Gastrocnemius medialis (tissue), 4 donors: ENCODE measurements at regions of chr13 and their contacts with region 1.

Region 1: DNA sequence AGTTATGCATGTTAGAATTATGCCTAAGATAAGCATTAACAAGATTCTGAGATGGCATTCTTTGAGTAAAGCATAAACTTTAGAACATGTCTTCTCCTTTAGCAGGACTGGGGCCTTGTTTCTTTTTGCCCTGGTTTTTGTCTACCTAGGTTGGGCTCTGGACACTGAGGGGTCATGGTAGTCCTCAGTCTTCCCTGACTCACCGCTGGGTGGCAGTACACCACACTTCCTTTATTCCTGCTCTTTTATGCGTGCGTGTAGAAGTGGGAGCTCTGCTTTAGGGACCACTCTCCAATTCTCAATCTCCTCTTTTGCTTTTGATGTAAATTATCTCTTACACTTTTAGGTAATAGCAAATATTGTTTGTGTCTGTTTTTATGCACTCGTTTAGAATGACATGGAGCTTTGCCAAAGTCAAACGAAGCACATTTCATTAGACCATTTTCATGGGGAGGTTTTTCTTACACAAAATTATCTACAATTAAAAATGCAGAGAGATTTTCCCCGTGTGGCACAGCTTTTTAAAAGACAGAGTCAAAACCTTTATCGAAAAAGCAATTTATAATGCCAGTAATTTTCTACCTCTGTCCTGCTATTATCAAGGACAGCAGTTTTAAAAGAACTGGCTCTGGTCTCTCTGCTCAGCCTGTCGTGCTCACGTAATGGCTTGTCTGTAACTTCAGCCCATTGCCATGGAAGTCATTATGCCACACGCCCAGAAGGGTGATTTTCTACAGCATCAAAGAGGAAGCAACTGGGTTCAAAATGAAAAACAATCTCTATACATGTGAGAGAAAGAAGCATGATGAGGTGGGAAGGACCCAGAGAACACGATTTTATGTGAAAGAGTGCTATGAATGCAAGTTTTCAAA is 413.9 kb downstream of the COG6 start:
- DNase-seq: peak; percentile 64 to 79
- ATAC-seq: peak; percentile 94 to 98
- H3K4me3 ChIP-seq: peak overlapping the region; percentile 19 to 34 (median 26)
- H3K27ac ChIP-seq: peak overlapping the region; percentile 4 to 57 (median 44)
- H3K4me1 ChIP-seq: peaks cover 7 to 9% of the 10 kb centered on the region in 2 donors
- H3K27me3 ChIP-seq: no peaks in the 10 kb centered on the region
- CTCF ChIP-seq: peak; percentile 82 to 92 (median 89)
- POLR2A ChIP-seq: no peak

Region 2: DNA sequence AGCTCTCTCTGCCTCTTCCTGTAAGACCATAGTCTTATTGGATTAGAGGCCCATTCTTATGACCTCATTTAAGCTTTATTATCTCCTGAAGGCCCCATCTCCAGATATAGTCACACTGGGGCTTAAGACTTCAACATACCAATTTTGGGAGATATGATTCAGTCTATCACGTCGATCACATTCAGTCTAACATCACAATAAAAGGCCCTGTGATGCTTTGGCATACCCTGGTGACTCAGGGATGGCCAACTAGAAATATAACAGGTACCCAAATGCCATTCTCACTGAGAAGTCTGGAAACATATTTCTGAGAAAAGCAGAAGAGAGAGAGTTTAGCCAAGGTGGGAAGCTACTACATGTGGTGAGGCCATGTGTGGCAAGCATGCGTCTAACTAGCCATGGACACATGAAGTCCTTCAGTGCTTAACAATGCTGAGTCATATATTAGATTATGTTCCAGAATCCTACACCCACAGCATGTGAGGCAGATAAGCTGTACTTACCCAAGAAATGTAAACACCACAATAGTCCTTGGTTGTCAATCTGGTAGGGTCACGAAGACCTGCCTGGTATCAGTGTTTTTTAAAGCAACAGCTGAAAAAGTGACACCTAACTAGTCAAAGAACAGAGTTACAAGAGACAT is 111.9 kb after region 1 on chr13:
- in situ Hi-C with region 1: no loop called
- intact Hi-C with region 1: no loop called
- DNase-seq: no peak
- ATAC-seq: peak; percentile 61 to 82
- H3K4me3 ChIP-seq: no peak overlapping the region
- H3K27ac ChIP-seq: no peak overlapping the region
- H3K4me1 ChIP-seq: peaks cover 0 to 3% of the 10 kb centered on the region in 2 donors
- H3K27me3 ChIP-seq: no peaks in the 10 kb centered on the region
- CTCF ChIP-seq: no peak
- POLR2A ChIP-seq: no peak

Region 3: DNA sequence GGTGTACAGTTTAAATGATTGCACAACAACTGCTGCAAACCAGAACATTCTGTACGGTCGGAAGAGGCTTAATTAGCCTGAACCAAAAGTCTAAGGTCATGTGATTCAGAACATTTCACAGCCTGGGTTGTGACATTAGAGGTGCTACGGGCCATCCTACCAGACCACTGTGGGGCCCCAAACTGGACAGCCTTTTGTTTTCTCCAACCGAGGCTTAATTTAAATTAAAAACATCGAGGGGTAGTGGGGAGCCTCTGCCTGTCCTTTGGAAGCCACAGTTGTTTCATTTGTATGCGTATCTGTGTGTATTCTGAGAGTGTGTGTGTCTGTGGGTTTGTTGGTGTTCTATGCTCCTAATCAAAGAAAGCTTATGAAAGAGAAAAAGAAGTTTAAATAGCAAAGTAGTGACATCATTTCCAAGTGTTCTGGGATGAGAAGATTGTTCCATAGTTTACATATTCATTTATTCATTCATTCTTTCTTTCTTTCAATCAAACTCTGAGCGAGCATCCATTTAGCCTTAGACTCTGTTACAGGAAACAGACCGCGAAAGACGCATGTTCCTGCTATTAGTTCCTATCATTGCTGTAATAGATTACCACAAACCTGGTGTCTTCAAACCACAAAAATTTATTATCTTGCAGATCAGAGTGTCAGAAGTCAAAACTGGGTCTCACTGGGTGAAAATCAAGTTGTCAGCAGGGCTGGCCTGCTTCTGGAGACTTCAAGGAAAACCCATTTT is 152.2 kb after region 1 on chr13:
- in situ Hi-C with region 1: loop called in 1 of 4 experiments (anchors 10 kb)
- intact Hi-C with region 1: no loop called
- DNase-seq: peak; percentile 55 to 68
- ATAC-seq: peak; percentile 96 to 98
- H3K4me3 ChIP-seq: no peak overlapping the region
- H3K27ac ChIP-seq: peak overlapping the region; percentile 76 to 81 (median 78)
- H3K4me1 ChIP-seq: peaks cover 13 to 26% of the 10 kb centered on the region in 2 donors
- H3K27me3 ChIP-seq: no peaks in the 10 kb centered on the region
- CTCF ChIP-seq: no peak
- POLR2A ChIP-seq: no peak

Region 4: GRCh38 chr13:40318366-40318765 is 249.0 kb after region 1 on chr13:
- in situ Hi-C with region 1: loop called in 1 of 4 experiments (anchors 25 kb)
- intact Hi-C with region 1: no loop called
- DNase-seq: peak; percentile 82 to 86
- ATAC-seq: peak; percentile 79 to 81
- H3K4me3 ChIP-seq: no peak overlapping the region
- H3K27ac ChIP-seq: peak overlapping the region in 3 of 4 donors; percentile 3 to 49 (median 24)
- H3K4me1 ChIP-seq: peaks cover 11 to 17% of the 10 kb centered on the region in 2 donors
- H3K27me3 ChIP-seq: no peaks in the 10 kb centered on the region
- CTCF ChIP-seq: no peak
- POLR2A ChIP-seq: no peak

Region 5: GRCh38 chr13:40503966-40504591 is 434.7 kb after region 1 on chr13:
- in situ Hi-C with region 1: loop called in 1 of 4 experiments (anchors 25 kb)
- intact Hi-C with region 1: no loop called
- DNase-seq: no peak
- ATAC-seq: no peak
- H3K4me3 ChIP-seq: no peak overlapping the region
- H3K27ac ChIP-seq: no peak overlapping the region
- H3K4me1 ChIP-seq: peaks cover 17 to 24% of the 10 kb centered on the region in 2 donors
- H3K27me3 ChIP-seq: no peaks in the 10 kb centered on the region
- CTCF ChIP-seq: no peak
- POLR2A ChIP-seq: no peak

Region 6: GRCh38 chr13:40682449-40683240 is 613.2 kb after region 1 on chr13:
- in situ Hi-C with region 1: loop called (anchors 5 kb)
- intact Hi-C with region 1: loop called (anchors 1 kb)
- DNase-seq: no peak
- ATAC-seq: peak in 1 of 2 donors; percentile 22
- H3K4me3 ChIP-seq: no peak overlapping the region
- H3K27ac ChIP-seq: peak overlapping the region in 1 of 4 donors; percentile 61
- H3K4me1 ChIP-seq: peaks cover 13 to 19% of the 10 kb centered on the region in 2 donors
- H3K27me3 ChIP-seq: no peaks in the 10 kb centered on the region
- CTCF ChIP-seq: peak; percentile 46 to 75 (median 68)
- POLR2A ChIP-seq: no peak